Body of pancreas (tissue), 4 donors: ENCODE measurements at regions of chr5 and their contacts with region 1.

Region 1: GRCh38 chr5:113612060-113612496 is 98.6 kb downstream of the YTHDC2 start:
- DNase-seq: no peak
- ATAC-seq: no peak
- H3K4me3 ChIP-seq: no peak overlapping the region
- H3K27ac ChIP-seq: no peak overlapping the region
- H3K4me1 ChIP-seq: no peaks in the 10 kb centered on the region
- H3K27me3 ChIP-seq: no peaks in the 10 kb centered on the region
- CTCF ChIP-seq: peak in 6 of 7 experiments; percentile 53 to 71 (median 62)
- POLR2A ChIP-seq: no peak

Region 2: DNA sequence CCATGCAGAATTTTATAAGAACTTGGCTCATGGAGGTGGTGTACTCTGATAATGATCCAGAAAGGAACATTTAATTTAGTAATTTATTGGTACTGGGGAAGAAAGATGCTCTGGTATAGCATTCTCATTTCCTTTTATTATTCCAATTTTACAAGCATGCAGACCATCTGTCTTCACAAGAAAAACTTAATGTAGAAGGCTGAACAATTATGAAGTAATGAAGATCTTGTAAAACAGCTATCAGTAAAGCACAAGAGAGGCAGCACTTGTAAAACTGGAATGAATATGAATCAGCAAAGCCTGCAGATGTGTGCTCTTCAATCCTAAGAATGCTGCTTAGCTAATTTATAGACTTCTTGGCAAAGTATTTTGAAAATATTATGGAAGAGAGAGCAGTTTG is 201.4 kb after region 1 on chr5:
- intact Hi-C with region 1: no loop called
- DNase-seq: no peak
- ATAC-seq: no peak
- H3K4me3 ChIP-seq: no peak overlapping the region
- H3K27ac ChIP-seq: no peak overlapping the region
- H3K4me1 ChIP-seq: no peaks in the 10 kb centered on the region
- H3K27me3 ChIP-seq: no peaks in the 10 kb centered on the region
- CTCF ChIP-seq: no peak
- POLR2A ChIP-seq: no peak

Region 3: GRCh38 chr5:114185274-114185673 is 573.2 kb after region 1 on chr5:
- intact Hi-C with region 1: no loop called
- DNase-seq: no peak
- ATAC-seq: no peak
- H3K4me3 ChIP-seq: no peak overlapping the region
- H3K27ac ChIP-seq: no peak overlapping the region
- H3K4me1 ChIP-seq: no peaks in the 10 kb centered on the region
- H3K27me3 ChIP-seq: no peaks in the 10 kb centered on the region
- CTCF ChIP-seq: no peak
- POLR2A ChIP-seq: no peak

Region 4: GRCh38 chr5:115069087-115069968 is 1457.2 kb after region 1 on chr5:
- intact Hi-C with region 1: loop called (anchors 10 kb)
- DNase-seq: peak; percentile 27 to 55 (median 46)
- ATAC-seq: peak; percentile 69
- H3K4me3 ChIP-seq: no peak overlapping the region
- H3K27ac ChIP-seq: no peak overlapping the region
- H3K4me1 ChIP-seq: peaks cover 11% of the 10 kb centered on the region
- H3K27me3 ChIP-seq: no peaks in the 10 kb centered on the region
- CTCF ChIP-seq: peak; percentile 16 to 76 (median 65)
- POLR2A ChIP-seq: no peak